Panc1 (cell line): ENCODE measurements at regions of chr2 and their contacts with region 1.

Region 1: GRCh38 chr2:32330136-32330535 is 26.7 kb upstream of the BIRC6 start:
- DNase-seq: no peak
- ATAC-seq: no peak
- H3K4me3 ChIP-seq: no peak overlapping the region
- H3K27ac ChIP-seq: no peak overlapping the region
- H3K4me1 ChIP-seq: no peaks in the 10 kb centered on the region
- H3K27me3 ChIP-seq: no peaks in the 10 kb centered on the region
- CTCF ChIP-seq: no peak

Region 2: DNA sequence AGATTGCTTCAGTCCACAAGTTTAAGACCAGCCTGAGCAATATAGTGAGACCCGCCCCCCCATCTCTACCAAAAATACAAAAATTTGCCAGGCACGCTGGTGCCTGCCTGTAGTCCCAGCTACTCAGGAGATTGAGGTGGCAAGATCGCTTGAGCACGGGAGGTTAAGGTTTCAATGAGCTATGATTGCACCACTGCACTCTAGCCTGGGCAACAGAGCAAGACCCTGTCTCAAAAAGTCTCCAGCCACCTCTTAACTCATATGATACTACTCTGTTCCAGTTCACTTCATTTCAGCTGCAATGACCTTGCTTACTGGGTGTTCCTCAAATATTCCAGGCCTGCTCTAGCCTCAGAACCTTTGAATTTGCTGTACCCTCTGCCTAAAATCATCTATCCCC is 330.7 kb before region 1 on chr2:
- CTCF ChIA-PET with region 1: interaction called, 17 read pairs
- POLR2A ChIA-PET with region 1: no interaction called
- in situ Hi-C with region 1: no loop called
- intact Hi-C with region 1: no loop called
- DNase-seq: no peak
- ATAC-seq: no peak
- H3K4me3 ChIP-seq: no peak overlapping the region
- H3K27ac ChIP-seq: no peak overlapping the region
- H3K4me1 ChIP-seq: peaks cover 9% of the 10 kb centered on the region; the same call in 1 of the 2 replicates
- H3K27me3 ChIP-seq: no peaks in the 10 kb centered on the region
- CTCF ChIP-seq: no peak

Region 3: DNA sequence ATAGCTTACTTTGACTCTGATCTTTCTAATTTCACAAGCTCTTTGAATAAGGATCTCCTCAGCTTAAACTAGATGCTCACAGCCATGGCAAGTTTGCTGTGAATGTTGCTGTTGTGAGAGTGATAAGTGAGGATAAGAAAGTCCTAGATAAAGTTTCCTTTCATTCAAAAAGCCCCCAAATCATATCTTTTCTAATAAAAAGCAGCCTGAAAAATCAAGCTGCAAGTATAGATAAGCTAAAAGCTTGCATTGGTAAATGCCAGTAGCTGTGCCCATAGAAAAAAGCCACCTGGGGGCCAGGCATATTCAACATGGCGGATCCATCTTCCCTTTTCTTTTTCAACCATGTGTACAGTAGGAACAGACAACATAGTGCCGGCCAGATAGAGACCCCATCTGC is 69.8 kb before region 1 on chr2:
- CTCF ChIA-PET with region 1: no interaction called
- POLR2A ChIA-PET with region 1: no interaction called
- in situ Hi-C with region 1: no loop called
- intact Hi-C with region 1: no loop called
- DNase-seq: no peak
- ATAC-seq: no peak
- H3K4me3 ChIP-seq: no peak overlapping the region
- H3K27ac ChIP-seq: no peak overlapping the region
- H3K4me1 ChIP-seq: no peaks in the 10 kb centered on the region
- H3K27me3 ChIP-seq: no peaks in the 10 kb centered on the region
- CTCF ChIP-seq: no peak